SK-N-SH (cell line): ENCODE measurements at regions of chr3 and their contacts with region 1.

Region 1: GRCh38 chr3:132352541-132353143 is 35.4 kb downstream of the ACP3 start:
- DNase-seq: peak; percentile 62
- H3K4me3 ChIP-seq: no peak overlapping the region; a peak in 1 of 4 replicates
- H3K27ac ChIP-seq: no peak overlapping the region
- H3K4me1 ChIP-seq: no peaks in the 10 kb centered on the region
- H3K27me3 ChIP-seq: no peaks in the 10 kb centered on the region
- CTCF ChIP-seq: peak; percentile 93
- EP300 ChIP-seq: no peak
- RAD21 ChIP-seq: peak; percentile 94

Region 2: DNA sequence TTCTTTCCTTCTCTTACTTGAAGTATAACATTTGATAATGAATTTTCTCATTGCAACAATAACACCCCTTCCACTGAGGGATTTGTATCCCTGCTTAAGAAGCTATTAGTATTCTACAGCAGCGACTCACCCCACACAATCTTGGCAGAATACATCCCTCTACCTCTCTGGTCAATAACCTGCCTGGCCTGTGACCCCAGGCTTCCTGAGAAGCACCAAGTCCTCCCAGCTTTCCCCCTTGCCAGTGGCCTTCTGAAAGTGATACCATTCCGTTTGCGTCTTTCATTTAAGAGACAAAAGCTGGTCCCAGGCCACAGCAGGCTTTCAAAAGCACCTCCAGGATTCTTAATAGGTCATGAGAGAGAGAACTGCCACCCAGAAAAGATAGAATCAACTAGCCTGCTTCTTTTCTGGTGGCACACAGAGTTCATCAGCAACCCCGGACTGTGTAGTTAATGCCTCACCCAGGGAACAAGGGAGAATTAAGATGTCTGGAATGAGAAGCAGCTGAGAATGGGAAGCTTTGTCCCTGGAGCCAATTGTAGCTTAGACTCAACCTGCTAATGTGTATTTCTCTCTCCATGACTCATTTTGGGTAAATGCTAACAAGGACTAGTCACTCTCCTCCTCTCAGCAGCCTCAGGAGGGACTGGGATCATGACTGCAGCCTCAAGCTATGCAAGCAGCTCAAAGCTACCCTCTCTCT is 216.9 kb before region 1 on chr3:
- CTCF ChIA-PET with region 1: no interaction called
- POLR2A ChIA-PET with region 1: no interaction called
- DNase-seq: peak; percentile 13
- H3K4me3 ChIP-seq: peak overlapping the region; percentile 17 to 53; a peak in 3 of 4 replicates
- H3K27ac ChIP-seq: peak overlapping the region in 1 of 2 experiments; percentile 98; a peak in 2 of 4 replicates
- H3K4me1 ChIP-seq: peaks cover 0 to 17% of the 10 kb centered on the region in 2 experiments; a peak in 2 of 4 replicates
- H3K27me3 ChIP-seq: no peaks in the 10 kb centered on the region
- CTCF ChIP-seq: no peak
- EP300 ChIP-seq: peak in 1 of 2 experiments; percentile 78; a peak in 2 of 4 replicates
- RAD21 ChIP-seq: no peak

Region 3: DNA sequence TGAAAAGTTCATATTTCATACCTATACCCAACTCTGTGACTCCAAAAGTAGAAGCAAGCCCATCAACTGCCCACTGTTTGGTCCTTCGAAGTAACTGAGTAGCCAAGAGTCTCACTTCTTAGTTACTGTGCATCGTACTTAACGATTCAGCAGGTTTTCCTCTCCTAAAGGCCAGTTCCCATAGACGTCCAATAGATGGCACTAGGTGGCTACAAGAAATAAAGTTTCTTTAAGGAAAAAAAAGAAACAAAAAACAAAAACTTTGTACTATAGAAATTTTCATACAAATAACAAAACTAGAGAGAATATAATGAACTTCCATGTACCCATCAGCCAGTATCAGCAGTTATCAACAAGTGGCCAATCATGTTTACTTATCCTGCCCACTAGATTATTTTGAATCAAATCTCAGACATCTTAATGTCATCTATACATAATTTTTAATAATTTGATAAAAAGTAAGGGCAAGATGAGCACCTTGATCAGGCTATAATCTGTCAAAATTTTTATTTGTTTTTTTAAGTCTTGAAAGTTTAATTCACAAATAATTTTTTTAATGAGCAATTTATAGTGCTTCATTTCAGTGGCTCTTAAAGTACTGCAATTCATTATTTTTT is 99.3 kb before region 1 on chr3:
- CTCF ChIA-PET with region 1: interaction called, 52 read pairs
- POLR2A ChIA-PET with region 1: no interaction called
- DNase-seq: peak; percentile 45
- H3K4me3 ChIP-seq: peak overlapping the region in 1 of 2 experiments; percentile 10; a peak in 1 of 4 replicates
- H3K27ac ChIP-seq: no peak overlapping the region
- H3K4me1 ChIP-seq: no peaks in the 10 kb centered on the region; a peak in 1 of 4 replicates
- H3K27me3 ChIP-seq: no peaks in the 10 kb centered on the region
- CTCF ChIP-seq: peak; percentile 86
- EP300 ChIP-seq: no peak
- RAD21 ChIP-seq: peak; percentile 76